ENCODE measurements at regions of chr14 and their contacts with region 1.

Region 1: GRCh38 chr14:75514673-75515628 is 7.3 kb upstream of the BATF start:
- DNase-seq: peak; percentile 80
- ATAC-seq: peak; percentile 76
- H3K4me3 ChIP-seq: peak overlapping the region; percentile 73
- H3K27ac ChIP-seq: peak overlapping the region; percentile 97
- H3K4me1 ChIP-seq: peaks cover 54% of the 10 kb centered on the region
- H3K27me3 ChIP-seq: no peaks in the 10 kb centered on the region
- CTCF ChIP-seq: no peak
- EP300 ChIP-seq: peak in 1 of 2 experiments; percentile 73; a peak in 3 of 4 replicates
- POLR2A ChIP-seq: 0 out of 2 replicates have a peak, but pooled peaks have one; percentile 36
- RAD21 ChIP-seq: no peak

Region 2: DNA sequence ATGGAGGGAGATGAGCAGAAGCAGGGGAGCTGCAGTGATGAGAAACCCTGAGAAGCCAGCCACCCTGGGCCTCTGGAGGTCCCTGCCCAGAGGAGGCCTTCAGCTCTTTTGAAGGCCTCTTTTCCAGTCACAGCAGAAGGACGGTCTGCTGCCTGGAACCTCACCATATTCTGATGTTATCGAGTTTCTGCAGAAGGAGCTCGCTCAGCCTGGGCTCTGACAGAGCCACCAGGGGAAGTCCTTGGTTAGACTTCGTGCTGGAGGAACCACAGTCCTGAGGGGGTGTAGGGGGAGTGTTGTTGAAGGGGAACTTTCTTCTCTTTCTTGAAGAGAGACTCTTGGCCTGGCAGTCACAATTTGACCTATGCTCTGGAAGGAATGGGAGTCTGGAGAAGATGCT is 17.8 kb before region 1 on chr14:
- CTCF ChIA-PET with region 1: interaction called, 520 read pairs
- POLR2A ChIA-PET with region 1: interaction called, 385 read pairs
- RAD21 ChIA-PET with region 1: interaction called, 645 read pairs
- SMC1A ChIA-PET with region 1: interaction called, 619 read pairs
- in situ Hi-C with region 1: no loop called
- intact Hi-C with region 1: loop called (anchors 1 kb)
- DNase-seq: no peak
- ATAC-seq: peak; percentile 43
- H3K4me3 ChIP-seq: no peak overlapping the region
- H3K27ac ChIP-seq: peak overlapping the region; percentile 54
- H3K4me1 ChIP-seq: peaks cover 65% of the 10 kb centered on the region
- H3K27me3 ChIP-seq: no peaks in the 10 kb centered on the region
- CTCF ChIP-seq: no peak
- EP300 ChIP-seq: 0 out of 4 replicates have a peak, but pooled peaks of 1 of the 2 experiments have one; percentile 25
- POLR2A ChIP-seq: no peak
- RAD21 ChIP-seq: peak; percentile 41

Region 3: DNA sequence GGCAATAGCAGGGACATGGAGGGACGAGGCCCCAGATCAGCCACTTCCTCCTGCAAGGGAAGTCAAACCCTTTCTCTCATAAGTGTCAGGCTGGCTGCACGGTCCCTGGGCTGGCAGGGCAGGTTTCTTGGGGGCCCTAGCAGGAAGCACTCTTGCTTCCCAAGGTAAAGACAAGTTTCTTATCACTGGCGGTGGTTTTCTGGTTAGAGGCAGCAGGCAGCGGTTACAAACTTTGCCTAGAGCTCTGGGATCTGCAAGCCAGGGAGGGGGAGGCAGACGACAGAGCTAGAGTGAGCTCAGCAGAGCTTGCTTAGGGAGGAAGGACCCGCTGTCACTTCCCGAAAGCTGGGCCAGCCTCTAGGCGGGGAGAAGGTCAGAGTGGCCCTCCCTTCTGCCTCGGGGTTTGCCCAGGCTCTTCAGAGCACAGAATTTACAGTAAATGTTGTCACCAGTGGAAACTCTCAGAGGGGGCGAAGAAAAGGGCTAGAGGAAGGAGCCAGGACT is 27.7 kb after region 1 on chr14:
- CTCF ChIA-PET with region 1: interaction called, 481 read pairs
- POLR2A ChIA-PET with region 1: interaction called, 262 read pairs
- RAD21 ChIA-PET with region 1: interaction called, 419 read pairs
- SMC1A ChIA-PET with region 1: interaction called, 487 read pairs
- in situ Hi-C with region 1: no loop called
- intact Hi-C with region 1: loop called (anchors 2 kb)
- DNase-seq: no peak
- ATAC-seq: peak; percentile 84
- H3K4me3 ChIP-seq: peak overlapping the region; percentile 52
- H3K27ac ChIP-seq: peak overlapping the region; percentile 96
- H3K4me1 ChIP-seq: peaks cover 60% of the 10 kb centered on the region
- H3K27me3 ChIP-seq: no peaks in the 10 kb centered on the region
- CTCF ChIP-seq: no peak
- EP300 ChIP-seq: no peak
- POLR2A ChIP-seq: peak; percentile 64
- RAD21 ChIP-seq: no peak

Region 4: DNA sequence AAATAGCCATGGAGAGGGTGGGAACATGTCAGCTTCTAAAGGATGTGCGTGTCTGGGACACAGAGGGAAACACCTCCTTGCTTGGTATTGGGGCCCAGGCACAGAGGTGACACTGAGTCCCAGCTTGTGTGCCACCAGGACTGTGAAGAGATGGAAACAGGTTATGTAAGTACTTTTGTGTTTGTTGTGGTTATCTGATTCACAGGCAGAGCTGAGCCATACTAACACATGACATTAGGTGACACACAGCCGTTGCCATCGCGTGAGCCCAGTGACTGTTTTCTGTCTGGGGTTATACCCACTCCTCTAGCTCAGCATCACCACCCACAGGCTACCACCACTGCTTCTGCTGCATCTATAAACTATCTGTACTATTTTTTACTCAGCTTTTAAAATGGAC is 51.4 kb after region 1 on chr14:
- CTCF ChIA-PET with region 1: interaction called, 286 read pairs
- POLR2A ChIA-PET with region 1: interaction called, 14 read pairs
- RAD21 ChIA-PET with region 1: interaction called, 167 read pairs
- SMC1A ChIA-PET with region 1: interaction called, 232 read pairs
- in situ Hi-C with region 1: no loop called
- intact Hi-C with region 1: loop called (anchors 1 kb)
- DNase-seq: no peak
- ATAC-seq: peak; percentile 76
- H3K4me3 ChIP-seq: no peak overlapping the region
- H3K27ac ChIP-seq: no peak overlapping the region
- H3K4me1 ChIP-seq: peaks cover 25% of the 10 kb centered on the region
- H3K27me3 ChIP-seq: no peaks in the 10 kb centered on the region
- CTCF ChIP-seq: peak in 1 of 3 experiments; percentile 25; a peak in 1 of 6 replicates
- EP300 ChIP-seq: peak in 1 of 2 experiments; percentile 56; a peak in 2 of 4 replicates
- POLR2A ChIP-seq: no peak
- RAD21 ChIP-seq: no peak

Region 5: DNA sequence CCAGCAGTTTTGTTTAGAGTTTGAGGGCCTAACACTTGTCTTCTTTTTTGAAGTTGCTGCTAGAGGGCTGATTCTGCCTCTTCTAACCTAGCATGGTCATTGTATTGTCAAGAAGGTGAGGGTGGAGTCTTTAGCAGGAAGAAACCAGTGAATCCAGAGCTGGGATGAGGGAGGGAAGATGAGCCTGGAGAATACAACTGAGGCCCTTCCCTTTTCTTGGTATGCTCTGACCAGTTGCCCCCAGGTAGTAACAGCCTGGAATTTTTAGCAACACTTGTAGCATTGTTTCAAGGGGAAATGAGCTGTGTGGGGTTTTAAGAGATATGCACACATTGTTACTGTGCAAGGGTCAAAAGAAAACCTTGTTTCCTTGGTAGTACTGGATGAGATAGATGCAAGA is 72.4 kb after region 1 on chr14:
- CTCF ChIA-PET with region 1: no interaction called
- POLR2A ChIA-PET with region 1: no interaction called
- RAD21 ChIA-PET with region 1: no interaction called
- SMC1A ChIA-PET with region 1: no interaction called
- in situ Hi-C with region 1: no loop called
- intact Hi-C with region 1: no loop called
- DNase-seq: no peak
- ATAC-seq: no peak
- H3K4me3 ChIP-seq: no peak overlapping the region
- H3K27ac ChIP-seq: no peak overlapping the region
- H3K4me1 ChIP-seq: no peaks in the 10 kb centered on the region
- H3K27me3 ChIP-seq: no peaks in the 10 kb centered on the region
- CTCF ChIP-seq: no peak
- EP300 ChIP-seq: no peak
- POLR2A ChIP-seq: no peak
- RAD21 ChIP-seq: no peak

Measured in GM12878 (cell line).